ENCODE measurements at regions of chrX and their contacts with region 1.

Region 1: GRCh38 chrX:65331371-65331770 is 203.2 kb downstream of the LAS1L start:
- DNase-seq: no peak
- ATAC-seq: no peak
- H3K4me3 ChIP-seq: no peak overlapping the region
- H3K27ac ChIP-seq: no peak overlapping the region
- H3K4me1 ChIP-seq: no peaks in the 10 kb centered on the region
- H3K27me3 ChIP-seq: no peaks in the 10 kb centered on the region
- CTCF ChIP-seq: no peak
- EP300 ChIP-seq: no peak
- POLR2A ChIP-seq: no peak
- RAD21 ChIP-seq: no peak

Region 2: DNA sequence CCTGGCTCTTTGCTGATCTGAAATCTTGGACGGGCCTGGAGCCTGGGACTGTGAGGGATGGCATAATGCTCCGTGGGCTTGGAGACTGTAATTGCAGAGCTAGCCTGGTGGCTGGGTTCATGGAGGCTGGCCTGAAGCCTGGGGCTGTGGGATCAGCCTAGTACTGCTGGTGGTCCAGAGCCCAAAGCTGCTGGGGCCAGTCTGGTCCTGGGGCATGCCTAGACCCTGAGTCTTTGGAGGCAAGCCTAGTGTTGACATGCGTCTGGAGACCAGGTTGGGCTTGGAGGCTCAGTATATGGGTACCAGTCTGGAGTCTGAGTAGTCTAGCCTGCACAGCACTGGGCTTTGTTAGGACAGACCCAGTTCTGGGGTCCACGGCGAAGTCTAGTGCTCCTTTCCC is 183.1 kb before region 1 on chrX:
- CTCF ChIA-PET with region 1: no interaction called
- POLR2A ChIA-PET with region 1: no interaction called
- in situ Hi-C with region 1: no loop called
- intact Hi-C with region 1: no loop called
- DNase-seq: no peak
- ATAC-seq: no peak
- H3K4me3 ChIP-seq: no peak overlapping the region
- H3K27ac ChIP-seq: no peak overlapping the region
- H3K4me1 ChIP-seq: no peaks in the 10 kb centered on the region
- H3K27me3 ChIP-seq: no peaks in the 10 kb centered on the region
- CTCF ChIP-seq: no peak
- EP300 ChIP-seq: no peak
- POLR2A ChIP-seq: no peak
- RAD21 ChIP-seq: no peak

Region 3: DNA sequence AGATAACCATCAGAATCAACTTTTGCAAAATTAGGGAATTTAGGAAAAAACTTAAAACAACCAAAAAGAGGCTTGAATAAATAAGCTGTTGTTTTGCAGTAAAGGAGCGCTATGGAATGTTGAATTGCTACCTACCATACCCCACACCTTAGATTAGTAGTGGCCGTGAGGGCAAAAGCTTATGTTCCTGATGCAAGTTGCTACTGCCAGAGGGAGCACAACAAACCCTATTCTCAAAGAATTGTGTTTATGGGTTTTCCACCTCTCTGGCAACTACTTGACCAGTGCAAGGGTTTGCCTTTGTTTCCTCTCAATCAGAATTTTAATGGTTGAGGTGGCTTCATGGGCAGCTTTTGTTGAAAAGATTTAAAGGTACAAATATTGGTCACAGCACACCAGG is 64.9 kb before region 1 on chrX:
- CTCF ChIA-PET with region 1: no interaction called
- POLR2A ChIA-PET with region 1: no interaction called
- in situ Hi-C with region 1: no loop called
- intact Hi-C with region 1: loop called (anchors 10 kb)
- DNase-seq: no peak
- ATAC-seq: no peak
- H3K4me3 ChIP-seq: no peak overlapping the region
- H3K27ac ChIP-seq: no peak overlapping the region
- H3K4me1 ChIP-seq: no peaks in the 10 kb centered on the region
- H3K27me3 ChIP-seq: no peaks in the 10 kb centered on the region
- CTCF ChIP-seq: no peak
- EP300 ChIP-seq: no peak
- POLR2A ChIP-seq: no peak
- RAD21 ChIP-seq: no peak

Region 4: GRCh38 chrX:65607070-65607742 is 275.8 kb after region 1 on chrX:
- CTCF ChIA-PET with region 1: no interaction called
- POLR2A ChIA-PET with region 1: no interaction called
- in situ Hi-C with region 1: no loop called
- intact Hi-C with region 1: no loop called
- DNase-seq: no peak
- ATAC-seq: no peak
- H3K4me3 ChIP-seq: no peak overlapping the region
- H3K27ac ChIP-seq: no peak overlapping the region
- H3K4me1 ChIP-seq: no peaks in the 10 kb centered on the region
- H3K27me3 ChIP-seq: no peaks in the 10 kb centered on the region
- CTCF ChIP-seq: no peak
- EP300 ChIP-seq: no peak
- POLR2A ChIP-seq: no peak
- RAD21 ChIP-seq: no peak

Measured in HepG2 (cell line).